ENCODE measurements at regions of chr14 and their contacts with region 1.

Region 1: DNA sequence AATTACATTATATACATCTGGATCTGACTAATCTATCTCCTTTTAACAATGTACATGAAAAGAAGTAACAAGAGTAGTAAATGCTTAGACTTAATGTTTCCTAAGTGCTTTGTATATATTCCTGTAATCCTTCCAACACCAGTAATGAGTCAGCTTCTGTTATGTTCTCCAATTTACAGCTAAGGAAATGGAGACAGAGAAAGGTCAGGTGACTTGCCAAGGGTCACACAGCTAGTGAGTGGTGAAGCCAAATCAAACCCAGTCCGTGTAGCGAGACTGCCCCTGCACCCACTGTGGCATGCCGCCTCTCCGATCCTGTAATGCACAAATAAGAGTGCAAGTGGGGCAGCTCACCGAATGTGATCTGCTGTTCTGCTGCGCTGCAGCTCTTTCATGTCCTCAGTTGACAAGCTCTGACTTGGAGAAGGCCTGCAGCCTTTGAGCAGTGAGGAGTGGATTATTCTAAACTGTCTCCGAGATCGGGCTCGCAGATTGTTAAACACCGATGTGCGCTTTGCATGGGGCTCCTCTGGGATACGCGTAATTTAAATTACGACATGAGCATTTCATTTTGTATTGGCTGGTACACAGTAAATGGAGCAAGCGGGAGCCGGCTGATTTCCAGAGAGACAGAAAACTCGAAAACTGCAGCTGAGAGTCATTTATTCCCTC is 65.1 kb upstream of the KTN1 start:
- DNase-seq: peak; percentile 93
- H3K4me3 ChIP-seq: peak overlapping the region in 1 of 3 experiments; percentile 16
- H3K27ac ChIP-seq: peak overlapping the region; percentile 29
- H3K4me1 ChIP-seq: peaks cover 17% of the 10 kb centered on the region
- H3K27me3 ChIP-seq: no peaks in the 10 kb centered on the region
- CTCF ChIP-seq: no peak
- POLR2A ChIP-seq: no peak

Region 2: GRCh38 chr14:55579724-55580469 is 64.9 kb after region 1 on chr14 and contains the start of gene KTN1:
- CTCF ChIA-PET with region 1: interaction called, 3 read pairs
- POLR2A ChIA-PET with region 1: interaction called, 3 read pairs
- dilution Hi-C with region 1: no loop called
- intact Hi-C with region 1: loop called (anchors 2 kb)
- DNase-seq: peak; percentile 76
- H3K4me3 ChIP-seq: peak within 1 kb of the TSS; percentile 62 to 87 (median 73)
- H3K27ac ChIP-seq: peak within 1 kb of the TSS; percentile 70
- H3K4me1 ChIP-seq: peaks cover 8% of the 10 kb centered on the region
- H3K27me3 ChIP-seq: no peaks in the 10 kb centered on the region
- CTCF ChIP-seq: no peak
- POLR2A ChIP-seq: peak; percentile 67
- total RNA-seq, gene KTN1: 135 and 148 TPM in 2 replicates

Region 3: DNA sequence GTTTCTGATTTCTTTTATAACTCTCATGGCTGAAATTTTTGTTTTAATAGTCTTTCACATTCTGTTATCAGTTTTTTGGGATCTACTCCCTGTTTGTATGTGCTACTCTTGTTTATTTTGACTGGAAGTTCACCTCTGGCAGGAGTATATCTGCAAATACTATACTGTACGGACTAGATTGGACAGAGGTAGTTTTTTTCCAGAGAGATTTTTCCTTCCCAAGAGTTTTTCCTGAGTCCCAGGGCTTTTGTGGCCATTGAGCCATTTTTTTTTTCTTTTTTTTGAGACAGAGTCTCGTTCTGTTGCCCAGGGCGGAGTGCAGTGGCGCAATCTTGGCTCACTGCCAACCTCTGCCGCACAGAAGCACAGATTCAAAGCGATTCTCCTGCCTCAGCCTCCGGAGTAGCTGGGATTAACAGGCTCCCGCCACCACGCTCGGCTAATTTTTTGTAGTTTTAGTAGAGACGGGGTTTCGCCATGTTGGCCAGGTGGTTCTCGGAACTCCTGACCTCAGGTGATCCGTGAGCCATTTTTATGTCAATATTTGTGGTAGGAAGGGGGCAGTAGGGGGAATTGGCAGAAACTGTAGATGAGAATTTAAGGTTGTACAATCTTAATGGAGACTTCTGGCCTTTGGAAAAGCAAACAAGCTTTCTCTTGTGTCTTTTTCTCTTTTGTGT is 84.4 kb after region 1 on chr14:
- CTCF ChIA-PET with region 1: no interaction called
- POLR2A ChIA-PET with region 1: no interaction called
- dilution Hi-C with region 1: no loop called
- intact Hi-C with region 1: loop called (anchors 2 kb)
- DNase-seq: no peak
- H3K4me3 ChIP-seq: no peak overlapping the region
- H3K27ac ChIP-seq: no peak overlapping the region
- H3K4me1 ChIP-seq: peaks cover 16% of the 10 kb centered on the region
- H3K27me3 ChIP-seq: no peaks in the 10 kb centered on the region
- CTCF ChIP-seq: no peak
- POLR2A ChIP-seq: no peak

Region 4: GRCh38 chr14:56027916-56028712 is 513.2 kb after region 1 on chr14:
- CTCF ChIA-PET with region 1: no interaction called
- POLR2A ChIA-PET with region 1: no interaction called
- dilution Hi-C with region 1: no loop called
- intact Hi-C with region 1: no loop called
- DNase-seq: no peak
- H3K4me3 ChIP-seq: no peak overlapping the region
- H3K27ac ChIP-seq: no peak overlapping the region
- H3K4me1 ChIP-seq: no peaks in the 10 kb centered on the region
- H3K27me3 ChIP-seq: peaks cover 8 to 11% of the 10 kb centered on the region in 2 experiments
- CTCF ChIP-seq: no peak
- POLR2A ChIP-seq: no peak